OCI-LY7 (cell line): ENCODE measurements at regions of chr6 and their contacts with region 1.

Region 1: DNA sequence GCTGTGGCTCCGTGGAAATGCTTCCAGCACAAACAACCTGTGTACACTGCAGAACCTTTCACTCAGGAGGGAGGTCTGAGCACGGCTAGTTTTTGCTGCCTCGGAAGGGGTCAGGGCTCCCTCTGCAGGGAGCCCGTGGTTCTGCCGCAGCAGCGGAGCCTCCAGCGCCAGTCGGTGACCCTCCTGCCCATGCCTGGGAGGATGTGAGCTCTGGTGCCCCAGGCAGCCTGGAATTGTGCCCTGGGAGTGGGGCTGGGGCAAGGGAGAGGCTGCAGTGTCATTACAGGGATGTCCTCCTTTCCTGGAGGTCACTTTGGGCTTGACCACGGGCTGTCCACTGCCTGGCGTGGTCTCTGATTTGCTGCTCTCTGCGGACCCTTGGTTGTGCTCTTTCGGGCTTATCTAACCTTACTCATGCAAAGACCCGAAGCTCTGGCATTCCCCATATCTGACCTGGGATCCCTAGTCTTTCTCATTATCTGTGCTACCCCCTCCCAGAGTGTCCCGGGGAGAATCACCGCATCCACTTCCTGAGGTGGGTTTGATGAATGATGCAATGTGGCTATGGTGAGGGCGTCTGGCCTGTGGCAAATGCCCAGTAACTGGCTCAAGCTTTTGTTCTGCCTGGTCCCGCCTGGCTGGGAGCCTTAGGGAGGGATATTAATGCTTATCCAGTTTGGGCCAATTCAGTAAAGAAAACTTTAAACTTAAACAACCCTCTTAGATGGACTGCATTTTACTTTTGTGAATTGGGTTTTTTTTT is 59.6 kb upstream of the TAGAP start:
- DNase-seq: peak; percentile 91
- H3K4me3 ChIP-seq: peak overlapping the region; percentile 44
- H3K27ac ChIP-seq: peak overlapping the region; percentile 97
- H3K4me1 ChIP-seq: peaks cover 89% of the 10 kb centered on the region
- CTCF ChIP-seq: peak; percentile 98

Region 2: DNA sequence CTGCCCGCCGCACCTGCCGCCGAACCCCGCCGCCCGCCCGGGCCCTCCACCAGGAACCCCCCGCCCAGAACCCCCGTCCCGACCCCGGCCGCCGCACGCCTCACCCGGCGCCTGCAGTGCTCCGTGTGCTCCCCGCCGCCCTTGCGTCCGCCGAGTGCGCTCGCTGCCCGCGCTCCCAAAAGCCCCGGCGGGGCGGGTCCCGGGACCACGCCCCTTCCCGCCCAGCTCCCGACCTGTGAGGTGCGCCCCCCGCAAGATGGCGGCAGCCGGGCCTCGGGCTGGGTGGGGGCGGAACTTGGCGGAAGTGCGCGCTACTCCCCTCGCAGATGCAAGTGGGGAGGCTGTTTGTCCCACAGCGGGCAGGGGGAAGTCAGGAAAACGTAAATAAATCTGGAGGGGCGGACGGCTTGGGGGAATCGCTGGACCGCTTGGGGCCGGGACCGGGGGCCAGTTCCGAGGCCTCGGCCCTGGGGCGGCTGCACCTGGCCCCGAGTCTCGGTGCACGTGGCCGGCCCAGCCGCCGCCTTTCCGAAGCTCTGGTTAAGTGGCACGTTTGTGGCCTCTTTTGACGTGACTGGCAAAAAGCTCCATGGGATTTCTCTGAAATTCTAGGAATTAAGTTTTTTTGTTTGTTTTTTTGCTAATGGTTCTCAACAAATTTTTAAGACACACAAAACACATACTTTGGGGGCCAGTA is 285.0 kb before region 1 on chr6 and contains the start of gene EZR:
- CTCF ChIA-PET with region 1: no interaction called
- POLR2A ChIA-PET with region 1: no interaction called
- intact Hi-C with region 1: loop called (anchors 2 kb)
- DNase-seq: peak; percentile 95
- H3K4me3 ChIP-seq: peak within 1 kb of the TSS; percentile 87
- H3K27ac ChIP-seq: peak within 1 kb of the TSS; percentile 100
- H3K4me1 ChIP-seq: peaks cover 37% of the 10 kb centered on the region
- CTCF ChIP-seq: peak; percentile 32
- total RNA-seq, gene EZR: 268 and 360 TPM in 2 replicates

Region 3: DNA sequence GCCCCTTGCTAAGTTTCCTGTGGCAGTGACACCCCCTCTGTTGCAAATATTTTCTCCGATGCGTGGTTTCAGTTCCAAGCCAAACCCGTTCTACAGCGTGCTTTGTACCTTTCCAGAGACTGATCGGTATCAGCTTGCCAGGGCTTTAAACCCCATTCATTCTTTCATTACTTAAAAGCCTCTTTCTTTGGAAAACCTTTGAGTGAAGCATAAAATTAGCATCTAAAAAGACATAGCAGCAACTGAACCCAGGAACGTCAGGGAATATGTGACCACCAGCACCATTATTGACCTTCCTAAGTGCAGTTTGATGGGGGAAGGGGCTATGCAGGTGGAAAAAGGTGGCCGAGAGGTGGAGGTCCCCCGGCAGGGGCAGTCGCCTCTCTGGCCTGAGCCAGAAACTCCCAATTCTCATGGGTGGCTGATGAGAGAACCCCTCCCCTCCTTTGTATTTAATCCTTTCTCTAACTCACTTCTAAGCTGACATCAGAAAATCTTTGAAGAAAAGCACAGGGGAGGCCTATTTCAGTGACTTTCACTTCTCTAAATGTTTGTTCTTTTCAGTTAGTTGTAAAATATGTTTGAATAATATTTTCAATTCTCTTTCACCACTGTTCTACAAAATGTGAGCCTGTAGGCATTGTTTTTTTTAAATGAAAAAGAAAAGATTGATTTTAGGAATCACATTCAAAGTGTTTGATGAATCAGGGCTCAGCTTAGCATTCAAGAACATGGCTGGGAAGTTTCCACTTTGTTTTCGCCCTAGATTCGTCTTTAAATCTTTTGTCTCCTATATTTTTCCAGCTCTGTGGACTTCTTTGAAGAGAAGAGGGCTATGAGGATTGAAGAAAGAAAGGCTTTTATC is 193.6 kb before region 1 on chr6:
- CTCF ChIA-PET with region 1: no interaction called
- POLR2A ChIA-PET with region 1: no interaction called
- intact Hi-C with region 1: loop called (anchors 5 kb)
- DNase-seq: peak; percentile 90
- H3K4me3 ChIP-seq: peak overlapping the region; percentile 60
- H3K27ac ChIP-seq: peak overlapping the region; percentile 94
- H3K4me1 ChIP-seq: peaks cover 48% of the 10 kb centered on the region
- CTCF ChIP-seq: peak; percentile 52

Region 4: DNA sequence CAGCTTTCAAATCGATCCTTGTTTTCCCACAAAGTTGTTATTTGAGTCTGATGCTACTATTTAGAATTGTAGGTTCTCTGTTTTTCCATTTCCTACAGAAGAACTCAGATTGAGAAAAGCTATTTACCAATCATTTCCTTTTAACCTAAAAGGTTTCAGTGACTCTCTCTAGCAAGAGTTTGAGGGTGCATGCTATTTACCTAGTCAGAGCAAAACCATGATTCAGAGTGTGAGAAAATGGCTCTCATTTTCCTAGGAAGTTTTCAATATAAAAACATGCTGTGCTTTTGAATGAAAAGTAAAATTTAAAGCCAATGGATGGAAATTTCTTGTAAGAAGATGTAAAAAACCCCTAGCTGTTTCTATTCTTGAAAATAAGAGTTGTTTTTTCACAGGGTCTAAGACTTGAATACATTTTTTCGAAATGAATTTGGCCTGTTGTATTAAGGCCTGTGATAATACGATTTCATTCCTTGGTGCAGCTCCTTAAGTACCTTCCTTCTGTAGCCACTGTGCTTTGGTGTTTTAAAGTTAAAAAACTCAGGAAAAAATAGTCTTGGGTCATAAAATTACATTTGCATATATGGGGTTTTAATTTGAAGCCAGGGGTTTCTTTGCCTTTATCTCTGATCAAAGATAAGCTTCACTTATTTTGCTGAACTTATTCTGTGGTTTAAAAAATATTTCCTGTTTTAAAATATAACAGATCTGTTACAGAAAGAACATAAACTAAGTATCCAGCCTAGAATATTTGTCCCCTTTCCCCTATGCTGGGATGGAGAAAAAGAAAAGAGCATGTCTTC is 86.4 kb before region 1 on chr6:
- CTCF ChIA-PET with region 1: interaction called, 4 read pairs
- POLR2A ChIA-PET with region 1: interaction called, 14 read pairs
- intact Hi-C with region 1: no loop called
- DNase-seq: no peak
- H3K4me3 ChIP-seq: no peak overlapping the region
- H3K27ac ChIP-seq: peak overlapping the region; percentile 88
- H3K4me1 ChIP-seq: peaks cover 59% of the 10 kb centered on the region
- CTCF ChIP-seq: no peak

Region 5: GRCh38 chr6:159125014-159125609 is 20.8 kb after region 1 on chr6:
- CTCF ChIA-PET with region 1: interaction called, 7 read pairs
- POLR2A ChIA-PET with region 1: interaction called, 116 read pairs
- intact Hi-C with region 1: loop called (anchors 1 kb)
- DNase-seq: peak; percentile 52
- H3K4me3 ChIP-seq: no peak overlapping the region
- H3K27ac ChIP-seq: peak overlapping the region; percentile 89
- H3K4me1 ChIP-seq: peaks cover 72% of the 10 kb centered on the region
- CTCF ChIP-seq: peak; percentile 95